Calu3 (cell line): ENCODE measurements at regions of chr1 and their contacts with region 1.

Region 1: GRCh38 chr1:200336111-200336845 is 73.6 kb downstream of the ZNF281 start:
- DNase-seq: no peak
- H3K4me3 Mint-ChIP-seq: no peak overlapping the region
- H3K27ac Mint-ChIP-seq: peak overlapping the region; percentile 4
- H3K4me1 Mint-ChIP-seq: peaks cover 22% of the 10 kb centered on the region
- H3K27me3 Mint-ChIP-seq: no peaks in the 10 kb centered on the region
- CTCF ChIP-seq: no peak

Region 2: GRCh38 chr1:200372080-200372884 is 36.0 kb after region 1 on chr1:
- CTCF ChIA-PET with region 1: no interaction called
- intact Hi-C with region 1: loop called (anchors 5 kb)
- DNase-seq: peak; percentile 59
- H3K4me3 Mint-ChIP-seq: no peak overlapping the region
- H3K27ac Mint-ChIP-seq: no peak overlapping the region
- H3K4me1 Mint-ChIP-seq: peaks cover 83% of the 10 kb centered on the region
- H3K27me3 Mint-ChIP-seq: no peaks in the 10 kb centered on the region
- CTCF ChIP-seq: no peak

Region 3: DNA sequence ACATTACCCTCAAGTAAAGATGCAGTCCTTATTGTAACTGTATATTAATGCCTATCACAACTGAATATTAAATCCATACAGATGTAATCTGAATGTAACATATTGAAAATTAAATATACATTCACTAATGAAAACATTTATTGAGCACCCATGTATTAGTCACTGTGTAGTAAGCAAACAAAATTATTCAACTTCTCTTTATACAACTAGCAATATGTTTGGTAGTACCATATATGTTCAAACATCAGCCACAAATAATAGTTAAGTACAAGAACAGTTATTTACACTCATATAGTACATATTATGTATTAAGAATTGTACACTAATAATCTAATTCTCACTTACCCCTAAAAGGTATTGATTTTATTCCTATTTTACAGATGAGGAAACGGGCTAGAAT is 266.4 kb after region 1 on chr1:
- CTCF ChIA-PET with region 1: no interaction called
- intact Hi-C with region 1: no loop called
- DNase-seq: no peak
- H3K4me3 Mint-ChIP-seq: no peak overlapping the region
- H3K27ac Mint-ChIP-seq: no peak overlapping the region
- H3K4me1 Mint-ChIP-seq: no peaks in the 10 kb centered on the region
- H3K27me3 Mint-ChIP-seq: no peaks in the 10 kb centered on the region
- CTCF ChIP-seq: no peak